HEK293 (cell line): ENCODE measurements at regions of chr6 and their contacts with region 1.

Region 1: DNA sequence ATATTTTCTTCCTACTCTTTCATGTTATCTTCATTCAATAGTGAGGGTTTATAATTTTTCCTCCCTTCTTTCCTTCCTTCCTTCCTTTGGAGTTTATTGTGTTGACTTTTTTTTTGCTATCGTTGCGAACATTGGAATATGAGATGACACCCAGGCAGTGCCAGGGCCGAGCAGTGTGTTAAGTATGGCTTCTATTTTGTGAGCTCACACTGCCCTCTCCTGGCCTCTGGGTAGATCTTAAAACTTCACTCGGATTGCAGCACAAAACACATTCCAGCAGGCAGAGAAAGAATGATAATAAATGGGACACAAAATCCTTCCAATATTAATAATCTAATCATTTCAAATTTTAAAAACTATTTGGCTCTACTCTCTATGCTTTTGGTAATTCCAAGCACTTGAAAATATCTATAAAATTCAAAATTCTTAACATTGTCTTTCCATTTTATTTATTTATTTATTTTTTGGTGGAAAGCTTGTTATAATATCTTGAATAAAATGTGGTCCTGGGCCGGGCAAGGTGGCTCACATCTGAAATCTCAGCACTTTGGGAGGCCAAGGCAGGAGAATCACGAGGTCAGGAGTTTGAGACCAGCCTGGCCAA is 147.4 kb upstream of the OLIG3 start:
- H3K4me3 ChIP-seq: no peak overlapping the region
- H3K27ac ChIP-seq: no peak overlapping the region
- H3K4me1 ChIP-seq: no peaks in the 10 kb centered on the region; the same call in 1 of the 2 replicates
- CTCF ChIP-seq: peak; percentile 54

Region 2: GRCh38 chr6:137094411-137095008 is 547.1 kb before region 1 on chr6:
- CTCF ChIA-PET with region 1: interaction called, 11 read pairs
- POLR2A ChIA-PET with region 1: no interaction called
- H3K4me3 ChIP-seq: no peak overlapping the region
- H3K27ac ChIP-seq: no peak overlapping the region
- H3K4me1 ChIP-seq: no peaks in the 10 kb centered on the region
- CTCF ChIP-seq: peak; percentile 49; the same call in 1 of the 2 replicates

Region 3: GRCh38 chr6:137271245-137272183 is 370.1 kb before region 1 on chr6:
- CTCF ChIA-PET with region 1: interaction called, 11 read pairs
- POLR2A ChIA-PET with region 1: no interaction called
- H3K4me3 ChIP-seq: no peak overlapping the region
- H3K27ac ChIP-seq: no peak overlapping the region
- H3K4me1 ChIP-seq: no peaks in the 10 kb centered on the region
- CTCF ChIP-seq: no peak

Region 4: GRCh38 chr6:137680705-137681346 is 39.2 kb after region 1 on chr6:
- CTCF ChIA-PET with region 1: no interaction called
- POLR2A ChIA-PET with region 1: no interaction called
- H3K4me3 ChIP-seq: no peak overlapping the region
- H3K27ac ChIP-seq: no peak overlapping the region
- H3K4me1 ChIP-seq: no peaks in the 10 kb centered on the region
- CTCF ChIP-seq: no peak